ENCODE measurements at regions of chr19 and their contacts with region 1.

Region 1: GRCh38 chr19:38538793-38539528 is 78.8 kb downstream of the MAP4K1 start:
- DNase-seq: no peak
- H3K27ac ChIP-seq: no peak overlapping the region
- CTCF ChIP-seq: no peak

Region 2: GRCh38 chr19:38580080-38580479 is 41.1 kb after region 1 on chr19:
- CTCF ChIA-PET with region 1: no interaction called
- POLR2A ChIA-PET with region 1: no interaction called
- DNase-seq: no peak
- H3K27ac ChIP-seq: peak overlapping the region; percentile 76
- CTCF ChIP-seq: no peak

Region 3: DNA sequence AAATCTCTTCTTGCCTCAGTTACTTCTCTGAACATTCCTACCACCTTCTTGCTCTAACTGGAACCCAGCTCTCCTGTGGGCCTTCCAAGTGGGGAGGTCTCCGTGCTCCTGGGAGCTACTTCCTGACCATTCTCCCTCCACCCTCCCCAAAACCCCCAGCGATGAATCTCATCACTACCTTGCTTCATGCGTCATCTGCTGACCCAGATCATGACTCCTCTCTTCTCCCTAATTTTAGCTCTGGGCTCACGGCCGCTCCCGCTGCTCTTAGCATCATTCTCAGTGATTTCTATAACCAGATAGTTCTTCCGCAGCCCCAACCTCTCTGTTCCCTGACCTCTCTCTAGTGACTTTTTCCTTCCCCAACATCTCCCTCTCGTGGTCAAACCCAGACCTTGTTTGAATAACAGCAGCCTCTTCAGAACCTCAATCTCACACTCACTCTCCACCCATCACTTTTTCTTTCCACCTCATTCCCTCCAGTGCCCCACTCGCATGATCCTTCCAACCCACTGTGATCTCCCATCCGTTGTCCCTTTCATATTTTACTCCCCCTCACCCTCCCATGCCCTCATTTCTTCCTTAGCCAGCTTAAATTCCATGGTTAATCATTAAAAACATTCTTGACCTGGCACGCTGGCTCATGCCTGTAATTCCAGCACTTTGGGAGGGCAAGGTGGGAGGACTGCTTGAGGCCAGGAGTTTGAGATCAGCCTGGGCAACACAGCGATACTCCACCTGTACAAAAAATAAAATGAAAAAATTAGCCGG is 413.6 kb after region 1 on chr19:
- CTCF ChIA-PET with region 1: interaction called, 13 read pairs
- POLR2A ChIA-PET with region 1: no interaction called
- DNase-seq: no peak
- H3K27ac ChIP-seq: no peak overlapping the region
- CTCF ChIP-seq: no peak